A549 (cell line): ENCODE measurements at regions of chr14 and their contacts with region 1.

Region 1: GRCh38 chr14:51780006-51780692 is 80.3 kb upstream of the GNG2 start:
- DNase-seq: peak; percentile 61 to 72
- ATAC-seq: peak; percentile 38 to 76; a peak in 4 of 6 replicates
- H3K4me3 ChIP-seq: 0 out of 3 replicates have a peak overlapping the region, but pooled peaks have one; percentile 11
- H3K27ac ChIP-seq: no peak overlapping the region
- H3K4me1 ChIP-seq: no peaks in the 10 kb centered on the region
- CTCF ChIP-seq: peak; percentile 84
- EP300 ChIP-seq: no peak
- POLR2A ChIP-seq: no peak
- RAD21 ChIP-seq: peak; percentile 88 to 92

Region 2: DNA sequence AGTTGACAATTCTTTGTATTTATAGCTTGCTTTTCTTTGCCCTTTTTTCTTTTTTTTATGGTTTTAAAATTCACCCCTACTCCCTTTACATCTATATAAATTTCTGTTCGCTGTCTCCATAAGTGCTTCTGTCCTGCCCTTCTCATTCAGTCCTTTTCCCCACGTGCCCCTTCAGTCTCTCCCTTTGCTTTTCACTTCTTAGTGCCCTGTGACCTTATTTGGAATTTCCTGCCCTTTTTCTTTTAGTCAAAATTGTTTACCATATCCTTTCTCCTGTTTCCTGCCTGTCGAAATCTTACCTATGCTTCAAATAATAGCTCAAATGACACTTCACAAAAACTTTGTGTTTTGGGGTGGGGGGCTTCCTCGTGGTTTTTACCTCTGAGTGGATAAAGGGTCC is 534.1 kb before region 1 on chr14:
- CTCF ChIA-PET with region 1: interaction called, 17 read pairs
- POLR2A ChIA-PET with region 1: no interaction called
- DNase-seq: no peak
- ATAC-seq: no peak
- H3K4me3 ChIP-seq: no peak overlapping the region
- H3K27ac ChIP-seq: no peak overlapping the region
- H3K4me1 ChIP-seq: peaks cover 21% of the 10 kb centered on the region; the same call in 2 of the 3 replicates
- CTCF ChIP-seq: no peak
- EP300 ChIP-seq: no peak
- POLR2A ChIP-seq: no peak
- RAD21 ChIP-seq: no peak

Region 3: GRCh38 chr14:51277753-51278415 is 502.3 kb before region 1 on chr14:
- CTCF ChIA-PET with region 1: interaction called, 512 read pairs
- POLR2A ChIA-PET with region 1: no interaction called
- DNase-seq: no peak
- ATAC-seq: no peak
- H3K4me3 ChIP-seq: no peak overlapping the region
- H3K27ac ChIP-seq: no peak overlapping the region
- H3K4me1 ChIP-seq: no peaks in the 10 kb centered on the region
- CTCF ChIP-seq: no peak
- EP300 ChIP-seq: no peak
- POLR2A ChIP-seq: no peak
- RAD21 ChIP-seq: no peak

Region 4: GRCh38 chr14:51386983-51387735 is 393.0 kb before region 1 on chr14:
- CTCF ChIA-PET with region 1: interaction called, 11 read pairs
- POLR2A ChIA-PET with region 1: no interaction called
- DNase-seq: peak in 1 of 2 experiments; percentile 9
- ATAC-seq: no peak
- H3K4me3 ChIP-seq: no peak overlapping the region
- H3K27ac ChIP-seq: peak overlapping the region in 1 of 2 experiments; percentile 1; a peak in 1 of 6 replicates
- H3K4me1 ChIP-seq: peaks cover 10% of the 10 kb centered on the region; the same call in 2 of the 3 replicates
- CTCF ChIP-seq: no peak
- EP300 ChIP-seq: no peak
- POLR2A ChIP-seq: no peak
- RAD21 ChIP-seq: no peak

Region 5: DNA sequence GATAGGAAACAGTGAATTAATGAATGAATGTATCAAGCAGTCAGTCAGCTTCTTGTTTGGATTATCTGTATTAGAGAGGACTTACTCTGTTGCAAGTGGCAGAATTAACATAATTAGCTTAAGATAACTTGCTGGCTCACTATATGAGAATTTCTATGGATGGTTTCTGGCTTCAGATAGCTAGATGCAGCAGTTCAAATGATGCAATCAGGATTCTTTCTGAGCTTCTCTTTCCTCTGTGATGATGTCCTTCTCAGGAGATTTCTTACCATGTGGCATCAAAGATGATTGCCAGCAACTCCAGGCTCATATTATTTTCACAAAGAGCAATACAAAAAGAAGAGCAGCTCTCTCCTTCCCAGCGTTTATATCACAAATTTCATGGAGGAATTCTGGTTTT is 97.7 kb before region 1 on chr14:
- CTCF ChIA-PET with region 1: interaction called, 10 read pairs
- POLR2A ChIA-PET with region 1: no interaction called
- DNase-seq: no peak
- ATAC-seq: no peak
- H3K4me3 ChIP-seq: no peak overlapping the region
- H3K27ac ChIP-seq: no peak overlapping the region
- H3K4me1 ChIP-seq: peaks cover 11% of the 10 kb centered on the region
- CTCF ChIP-seq: no peak
- EP300 ChIP-seq: no peak
- POLR2A ChIP-seq: no peak
- RAD21 ChIP-seq: no peak

Region 6: DNA sequence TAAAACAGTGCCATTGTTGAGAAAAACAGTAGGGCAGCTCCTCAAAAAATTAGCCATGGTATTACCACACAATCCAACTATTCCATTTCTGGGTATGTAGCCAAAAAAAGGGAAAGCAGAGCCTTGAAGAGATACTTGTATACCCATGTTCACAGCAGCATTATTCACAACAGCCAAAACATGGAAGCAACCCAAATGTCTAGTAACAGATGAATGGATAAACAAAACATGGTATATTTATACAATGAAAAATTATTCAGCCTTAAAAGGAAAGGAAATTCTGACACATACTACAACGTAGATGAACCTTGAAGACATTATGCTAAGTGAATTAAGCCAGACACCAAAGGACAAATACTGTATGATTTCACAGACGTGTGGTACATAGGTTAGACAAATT is 12.7 kb after region 1 on chr14:
- CTCF ChIA-PET with region 1: interaction called, 32 read pairs
- POLR2A ChIA-PET with region 1: no interaction called
- DNase-seq: no peak
- ATAC-seq: no peak
- H3K4me3 ChIP-seq: no peak overlapping the region
- H3K27ac ChIP-seq: no peak overlapping the region
- H3K4me1 ChIP-seq: no peaks in the 10 kb centered on the region
- CTCF ChIP-seq: no peak
- EP300 ChIP-seq: no peak
- POLR2A ChIP-seq: no peak
- RAD21 ChIP-seq: no peak